Activated B cell treated with CpG ODN at 0.5 μM for 24 hours (primary cell): ENCODE measurements at regions of chr16 and their contacts with region 1.

Region 1: DNA sequence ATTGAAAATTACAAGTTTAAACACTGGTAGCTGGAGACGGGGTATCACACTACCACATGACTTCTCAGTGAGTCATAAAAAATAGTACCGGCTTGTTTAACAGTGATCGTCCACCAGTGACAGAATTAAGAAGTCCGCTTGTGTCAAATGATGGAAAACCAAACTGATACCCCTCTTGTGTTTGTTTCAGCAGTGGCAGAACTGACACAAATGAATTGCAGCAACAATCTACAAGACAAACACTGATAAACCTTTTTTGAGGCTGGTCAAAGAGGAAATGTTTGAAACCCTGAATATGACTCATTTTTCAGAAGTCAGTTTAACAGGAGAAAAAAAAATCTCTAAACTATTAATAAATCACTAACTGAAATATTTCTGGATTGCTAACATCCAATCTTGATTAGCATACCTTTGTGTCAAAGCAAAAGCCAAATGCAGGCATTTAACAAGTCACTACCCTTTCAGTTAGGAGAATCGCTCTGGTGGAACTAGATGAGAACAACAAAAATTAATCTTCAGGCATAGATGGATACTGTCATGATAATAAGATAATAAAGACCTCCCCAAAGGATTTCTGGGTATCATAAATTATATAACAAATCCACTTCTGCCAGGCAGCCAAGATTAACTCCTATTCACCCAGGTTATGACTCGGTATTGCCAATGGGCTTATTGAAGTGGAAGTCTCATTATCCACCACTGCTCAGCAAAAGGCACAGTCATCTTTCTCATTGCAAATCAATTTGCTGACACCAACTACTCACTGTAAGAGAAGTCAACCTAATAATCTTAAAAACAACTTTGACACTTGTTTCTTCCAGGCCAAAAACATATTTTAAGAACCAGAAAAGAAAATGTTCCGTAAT is 20.8 kb downstream of the DCUN1D3 start:
- DNase-seq: no peak
- ATAC-seq: no peak
- H3K4me3 Mint-ChIP-seq: no peak overlapping the region
- H3K27ac Mint-ChIP-seq: no peak overlapping the region
- H3K4me1 Mint-ChIP-seq: peaks cover 38% of the 10 kb centered on the region
- H3K27me3 Mint-ChIP-seq: no peaks in the 10 kb centered on the region
- CTCF ChIP-seq: no peak

Region 2: DNA sequence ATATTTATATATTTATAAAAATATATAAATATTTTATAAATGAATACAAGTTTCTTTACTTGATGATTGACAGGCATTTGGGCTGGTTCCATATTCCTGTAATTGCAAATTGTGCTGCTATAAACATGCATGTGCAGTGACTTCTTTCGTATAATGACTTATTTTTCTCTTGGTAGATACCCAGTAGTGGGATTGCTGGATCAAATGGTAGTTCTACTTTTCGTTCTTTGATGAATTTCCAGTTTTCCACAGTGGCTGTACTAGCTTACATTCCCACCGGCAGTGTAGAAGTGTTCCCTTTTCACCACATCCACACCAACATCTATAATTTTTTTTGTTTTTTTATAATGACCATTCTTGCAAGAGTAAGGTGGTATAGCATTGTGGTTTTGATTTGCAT is 311.0 kb before region 1 on chr16:
- CTCF ChIA-PET with region 1: no interaction called
- POLR2A ChIA-PET with region 1: no interaction called
- intact Hi-C with region 1: no loop called
- DNase-seq: no peak
- ATAC-seq: no peak
- H3K4me3 Mint-ChIP-seq: no peak overlapping the region
- H3K27ac Mint-ChIP-seq: no peak overlapping the region
- H3K4me1 Mint-ChIP-seq: no peaks in the 10 kb centered on the region
- H3K27me3 Mint-ChIP-seq: no peaks in the 10 kb centered on the region
- CTCF ChIP-seq: no peak

Region 3: GRCh38 chr16:20838240-20838639 is 41.2 kb before region 1 on chr16:
- CTCF ChIA-PET with region 1: no interaction called
- POLR2A ChIA-PET with region 1: no interaction called
- intact Hi-C with region 1: no loop called
- DNase-seq: no peak
- ATAC-seq: no peak
- H3K4me3 Mint-ChIP-seq: no peak overlapping the region
- H3K27ac Mint-ChIP-seq: no peak overlapping the region
- H3K4me1 Mint-ChIP-seq: peaks cover 14% of the 10 kb centered on the region
- H3K27me3 Mint-ChIP-seq: no peaks in the 10 kb centered on the region
- CTCF ChIP-seq: no peak

Region 4: GRCh38 chr16:20944861-20945574 is 65.6 kb after region 1 on chr16:
- CTCF ChIA-PET with region 1: no interaction called
- POLR2A ChIA-PET with region 1: no interaction called
- intact Hi-C with region 1: loop called (anchors 10 kb)
- DNase-seq: no peak
- ATAC-seq: no peak
- H3K4me3 Mint-ChIP-seq: no peak overlapping the region
- H3K27ac Mint-ChIP-seq: no peak overlapping the region
- H3K4me1 Mint-ChIP-seq: peaks cover 2% of the 10 kb centered on the region
- H3K27me3 Mint-ChIP-seq: no peaks in the 10 kb centered on the region
- CTCF ChIP-seq: no peak

Region 5: DNA sequence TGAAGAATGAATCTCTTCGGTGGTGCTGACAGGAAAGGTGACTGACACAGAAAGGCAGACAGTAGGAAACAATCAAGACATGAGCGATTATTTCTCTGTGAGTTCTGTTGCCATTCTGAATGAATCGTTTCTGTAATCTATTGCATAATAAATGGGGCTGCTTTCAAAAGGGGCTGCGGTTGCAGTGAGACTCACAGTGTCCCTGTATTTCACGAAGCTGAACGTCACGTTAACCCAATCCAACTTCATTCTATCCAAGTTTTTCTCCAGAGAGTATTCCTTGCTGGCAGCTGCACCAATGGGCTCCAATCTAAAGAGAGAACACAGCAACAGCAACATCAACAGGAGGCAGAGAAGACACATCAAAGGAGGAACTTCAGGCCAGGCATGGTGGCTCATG is 195.8 kb after region 1 on chr16:
- CTCF ChIA-PET with region 1: no interaction called
- POLR2A ChIA-PET with region 1: no interaction called
- intact Hi-C with region 1: no loop called
- DNase-seq: no peak
- ATAC-seq: no peak
- H3K4me3 Mint-ChIP-seq: no peak overlapping the region
- H3K27ac Mint-ChIP-seq: no peak overlapping the region
- H3K4me1 Mint-ChIP-seq: no peaks in the 10 kb centered on the region
- H3K27me3 Mint-ChIP-seq: peaks cover 3% of the 10 kb centered on the region
- CTCF ChIP-seq: no peak